ENCODE measurements at regions of chr10 and their contacts with region 1.

Region 1: DNA sequence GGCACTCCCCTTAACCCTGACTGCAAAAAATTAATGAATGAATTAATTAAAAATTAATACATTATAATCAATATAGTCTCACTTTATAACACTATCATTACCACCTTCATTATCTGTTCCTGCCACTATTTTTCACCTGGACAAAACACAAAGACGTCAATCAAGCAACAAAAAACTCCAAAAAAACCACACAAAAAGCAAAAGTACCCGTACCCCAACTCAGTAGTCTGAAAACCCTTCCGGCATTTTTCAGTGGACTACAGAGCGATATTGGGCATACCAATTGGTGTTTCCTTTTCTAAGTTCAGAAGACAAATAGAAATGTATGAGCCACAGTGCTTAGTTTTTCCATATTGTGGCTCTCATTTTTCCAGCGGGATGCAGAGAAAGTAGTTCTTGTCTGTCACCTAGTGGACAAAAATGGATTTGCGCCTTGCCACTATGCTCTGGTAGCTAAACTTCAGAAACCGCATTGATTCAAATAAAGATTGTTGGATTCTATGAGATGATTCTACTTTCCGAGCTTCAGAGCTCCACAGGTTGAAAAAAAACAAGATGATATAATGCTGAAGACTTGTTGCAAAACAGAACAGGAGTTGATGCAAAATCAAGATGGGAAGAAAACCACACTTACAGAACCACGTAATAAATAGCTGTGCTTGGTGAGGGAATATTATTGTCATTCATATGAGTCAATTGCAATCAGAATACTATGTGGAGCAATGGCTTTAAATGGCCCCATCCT is 50.6 kb upstream of the ITGB1 start:
- DNase-seq: peak; percentile 74
- H3K4me3 ChIP-seq: no peak overlapping the region
- CTCF ChIP-seq: peak; percentile 75

Region 2: GRCh38 chr10:32795598-32796183 is 213.0 kb before region 1 on chr10:
- CTCF ChIA-PET with region 1: interaction called, 40 read pairs
- POLR2A ChIA-PET with region 1: no interaction called
- DNase-seq: no peak
- H3K4me3 ChIP-seq: no peak overlapping the region
- CTCF ChIP-seq: peak; percentile 34

Region 3: GRCh38 chr10:32958085-32959005 is 50.3 kb before region 1 on chr10 and contains the start of gene ITGB1:
- CTCF ChIA-PET with region 1: interaction called, 11 read pairs
- POLR2A ChIA-PET with region 1: interaction called, 4 read pairs
- DNase-seq: peak; percentile 68
- H3K4me3 ChIP-seq: peak within 1 kb of the TSS; percentile 75
- CTCF ChIP-seq: no peak

Region 4: GRCh38 chr10:32980558-32981468 is 27.9 kb before region 1 on chr10:
- CTCF ChIA-PET with region 1: interaction called, 13 read pairs
- POLR2A ChIA-PET with region 1: interaction called, 6 read pairs
- DNase-seq: peak; percentile 97
- H3K4me3 ChIP-seq: peak overlapping the region; percentile 45
- CTCF ChIP-seq: no peak

Region 5: GRCh38 chr10:33047655-33048054 is 39.0 kb after region 1 on chr10:
- CTCF ChIA-PET with region 1: no interaction called
- POLR2A ChIA-PET with region 1: no interaction called
- DNase-seq: no peak
- H3K4me3 ChIP-seq: no peak overlapping the region
- CTCF ChIP-seq: peak; percentile 14

Region 6: GRCh38 chr10:33155720-33156638 is 147.3 kb after region 1 on chr10:
- CTCF ChIA-PET with region 1: interaction called, 16 read pairs
- POLR2A ChIA-PET with region 1: no interaction called
- DNase-seq: no peak
- H3K4me3 ChIP-seq: no peak overlapping the region
- CTCF ChIP-seq: peak; percentile 51